B cell (primary cell): ENCODE measurements at regions of chr2 and their contacts with region 1.

Region 1: DNA sequence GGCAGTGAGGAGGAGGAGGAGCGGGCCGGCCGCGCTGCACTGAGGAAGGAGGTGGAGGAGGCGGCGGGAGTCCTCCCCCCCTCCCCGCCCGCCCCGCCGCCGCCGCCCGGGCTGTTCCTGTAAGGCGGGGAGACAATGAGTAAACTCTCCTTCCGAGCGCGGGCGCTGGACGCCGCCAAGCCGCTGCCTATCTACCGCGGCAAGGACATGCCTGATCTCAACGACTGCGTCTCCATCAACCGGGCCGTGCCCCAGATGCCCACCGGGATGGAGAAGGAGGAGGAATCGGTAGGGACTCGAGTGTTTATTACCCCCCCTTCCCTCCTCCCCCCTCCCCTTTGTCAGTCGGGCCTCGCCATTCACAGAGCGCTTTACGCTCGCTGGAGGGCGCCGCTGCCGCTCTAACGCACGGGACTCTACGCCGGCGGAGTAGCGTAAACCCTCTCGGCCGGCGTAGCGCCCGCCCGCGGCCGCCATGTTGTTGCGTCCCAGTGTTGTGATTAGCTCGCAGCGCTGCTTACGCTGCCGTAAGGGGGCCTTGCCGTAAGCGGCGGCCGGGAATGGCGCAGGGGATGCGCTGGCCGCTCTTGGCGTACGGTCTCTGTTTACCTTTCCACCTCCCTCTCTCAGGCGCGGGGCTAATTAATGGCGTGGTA is 460 bp downstream of the EPC2 start:
- DNase-seq: peak; percentile 99
- ATAC-seq: peak; percentile 78
- H3K4me3 ChIP-seq: peak overlapping the region; percentile 84 to 96 (median 93)
- H3K4me3 Mint-ChIP-seq: peak overlapping the region; percentile 97
- H3K27ac ChIP-seq: peak overlapping the region; percentile 92 to 94
- H3K27ac Mint-ChIP-seq: peak overlapping the region; percentile 98
- H3K4me1 ChIP-seq: peaks cover 19 to 25% of the 10 kb centered on the region in 2 donors
- H3K4me1 Mint-ChIP-seq: peaks cover 40% of the 10 kb centered on the region
- H3K27me3 ChIP-seq: no peaks in the 10 kb centered on the region
- H3K27me3 Mint-ChIP-seq: no peaks in the 10 kb centered on the region
- CTCF ChIP-seq: peak; percentile 22

Region 2: DNA sequence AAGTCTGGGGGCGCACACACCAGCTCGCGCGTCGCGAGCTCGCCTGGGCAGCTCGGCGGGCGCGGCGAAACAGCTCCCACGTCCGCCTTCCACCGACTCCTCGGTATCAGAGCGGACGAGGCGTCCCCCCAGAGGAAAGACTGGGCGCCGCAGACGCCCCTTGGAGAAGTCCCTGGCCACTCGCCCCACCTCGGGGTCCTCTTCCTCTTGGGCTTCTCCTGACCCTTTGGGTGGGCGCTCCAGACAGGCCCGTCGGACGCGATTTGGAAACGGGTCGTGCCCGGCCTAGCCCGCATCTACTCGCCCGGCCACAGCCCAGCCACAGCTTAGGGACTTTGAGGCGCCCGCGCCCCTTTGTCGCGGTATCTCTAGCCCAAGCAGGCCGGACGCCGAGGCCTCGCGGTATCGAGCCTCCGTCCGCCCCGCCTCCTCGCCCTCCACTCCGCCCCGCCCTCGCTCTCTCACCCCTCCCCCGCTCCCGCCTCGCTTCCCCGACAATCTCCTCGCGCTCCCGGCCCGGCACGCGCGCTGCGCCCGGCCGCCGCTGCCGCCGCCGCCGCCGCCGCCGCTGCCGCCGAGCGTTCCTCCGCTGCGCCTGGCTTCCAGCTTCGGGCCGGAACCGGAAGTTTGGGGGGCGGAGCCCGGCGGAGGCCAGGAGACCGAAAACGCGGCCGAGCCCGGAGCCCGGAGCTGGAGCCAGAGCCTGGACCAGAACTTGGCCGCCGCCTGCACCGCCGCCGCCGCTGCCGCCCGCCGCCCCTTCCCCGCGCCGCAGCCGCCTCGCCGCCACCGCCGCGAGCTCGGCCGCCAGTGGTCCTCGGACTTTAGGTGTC is 800.9 kb before region 1 on chr2:
- CTCF ChIA-PET with region 1: no interaction called
- POLR2A ChIA-PET with region 1: no interaction called
- intact Hi-C with region 1: loop called (anchors 10 kb)
- DNase-seq: peak; percentile 91
- ATAC-seq: peak; percentile 87
- H3K4me3 ChIP-seq: peak overlapping the region; percentile 11 to 89 (median 69)
- H3K4me3 Mint-ChIP-seq: peak overlapping the region; percentile 95
- H3K27ac ChIP-seq: peak overlapping the region; percentile 29 to 56
- H3K27ac Mint-ChIP-seq: peak overlapping the region; percentile 86
- H3K4me1 ChIP-seq: peaks cover 19 to 21% of the 10 kb centered on the region in 2 donors
- H3K4me1 Mint-ChIP-seq: peaks cover 27% of the 10 kb centered on the region
- H3K27me3 ChIP-seq: peaks cover 0 to 29% (median 26%) of the 10 kb centered on the region in 4 experiments
- H3K27me3 Mint-ChIP-seq: peaks cover 51% of the 10 kb centered on the region
- CTCF ChIP-seq: no peak

Region 3: GRCh38 chr2:148020111-148021058 is 624.6 kb before region 1 on chr2 and contains the start of gene ORC4:
- CTCF ChIA-PET with region 1: no interaction called
- POLR2A ChIA-PET with region 1: interaction called, 21 read pairs
- intact Hi-C with region 1: loop called (anchors 1 kb)
- DNase-seq: peak; percentile 99
- ATAC-seq: peak; percentile 89
- H3K4me3 ChIP-seq: peak within 1 kb of the TSS; percentile 79 to 95 (median 80)
- H3K4me3 Mint-ChIP-seq: peak within 1 kb of the TSS; percentile 99
- H3K27ac ChIP-seq: peak within 1 kb of the TSS; percentile 91 to 92
- H3K27ac Mint-ChIP-seq: peak within 1 kb of the TSS; percentile 94
- H3K4me1 ChIP-seq: peaks cover 23 to 37% of the 10 kb centered on the region in 2 donors
- H3K4me1 Mint-ChIP-seq: peaks cover 52% of the 10 kb centered on the region
- H3K27me3 ChIP-seq: no peaks in the 10 kb centered on the region
- H3K27me3 Mint-ChIP-seq: no peaks in the 10 kb centered on the region
- CTCF ChIP-seq: no peak
- total RNA-seq, gene ORC4: 44.3 and 48.9 TPM in 2 replicates

Region 4: GRCh38 chr2:148447877-148448276 is 197.1 kb before region 1 on chr2:
- CTCF ChIA-PET with region 1: no interaction called
- POLR2A ChIA-PET with region 1: no interaction called
- intact Hi-C with region 1: no loop called
- DNase-seq: no peak
- ATAC-seq: no peak
- H3K4me3 ChIP-seq: no peak overlapping the region
- H3K4me3 Mint-ChIP-seq: no peak overlapping the region
- H3K27ac ChIP-seq: no peak overlapping the region
- H3K27ac Mint-ChIP-seq: no peak overlapping the region
- H3K4me1 ChIP-seq: no peaks in the 10 kb centered on the region
- H3K4me1 Mint-ChIP-seq: no peaks in the 10 kb centered on the region
- H3K27me3 ChIP-seq: no peaks in the 10 kb centered on the region
- H3K27me3 Mint-ChIP-seq: no peaks in the 10 kb centered on the region
- CTCF ChIP-seq: no peak

Region 5: DNA sequence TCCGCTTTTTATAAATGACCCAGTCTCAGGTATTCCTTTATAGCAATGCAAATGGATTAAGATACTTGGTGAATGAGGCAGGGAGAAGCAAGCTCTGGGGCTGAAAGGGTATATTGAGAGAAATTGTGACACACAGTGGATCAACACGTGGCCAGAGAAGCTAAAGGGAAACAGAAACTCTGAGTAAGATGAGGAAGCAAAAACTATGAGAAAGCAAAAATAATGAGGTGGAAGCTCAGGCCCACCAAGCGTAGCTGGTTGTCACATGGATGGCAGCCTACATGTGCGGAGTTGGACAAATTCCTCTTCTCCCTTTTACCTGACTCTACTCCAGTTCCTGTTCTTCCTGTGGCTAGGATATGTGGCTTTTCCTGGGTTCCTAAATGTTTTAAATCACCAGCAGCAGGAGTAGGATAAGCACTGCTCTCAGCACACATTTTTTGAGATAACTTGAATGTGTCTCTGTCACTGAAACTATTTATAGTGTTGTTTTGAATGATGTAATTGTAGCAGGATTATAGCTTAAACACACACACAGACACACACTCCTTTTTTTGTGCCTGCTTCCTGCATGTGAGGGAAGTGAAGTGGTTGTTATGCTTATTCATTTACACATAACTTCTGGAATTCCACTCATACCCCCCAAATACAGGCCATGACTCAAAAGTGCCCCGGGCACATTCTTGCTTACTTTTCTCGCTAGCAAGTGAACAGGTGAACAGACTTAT is 30.5 kb before region 1 on chr2:
- CTCF ChIA-PET with region 1: no interaction called
- POLR2A ChIA-PET with region 1: no interaction called
- intact Hi-C with region 1: loop called (anchors 2 kb)
- DNase-seq: peak; percentile 59
- ATAC-seq: peak; percentile 83
- H3K4me3 ChIP-seq: no peak overlapping the region
- H3K4me3 Mint-ChIP-seq: peak overlapping the region; percentile 15
- H3K27ac ChIP-seq: peak overlapping the region; percentile 42 to 59
- H3K27ac Mint-ChIP-seq: peak overlapping the region; percentile 59
- H3K4me1 ChIP-seq: peaks cover 20 to 28% of the 10 kb centered on the region in 2 donors
- H3K4me1 Mint-ChIP-seq: peaks cover 20% of the 10 kb centered on the region
- H3K27me3 ChIP-seq: no peaks in the 10 kb centered on the region
- H3K27me3 Mint-ChIP-seq: no peaks in the 10 kb centered on the region
- CTCF ChIP-seq: no peak

Region 6: DNA sequence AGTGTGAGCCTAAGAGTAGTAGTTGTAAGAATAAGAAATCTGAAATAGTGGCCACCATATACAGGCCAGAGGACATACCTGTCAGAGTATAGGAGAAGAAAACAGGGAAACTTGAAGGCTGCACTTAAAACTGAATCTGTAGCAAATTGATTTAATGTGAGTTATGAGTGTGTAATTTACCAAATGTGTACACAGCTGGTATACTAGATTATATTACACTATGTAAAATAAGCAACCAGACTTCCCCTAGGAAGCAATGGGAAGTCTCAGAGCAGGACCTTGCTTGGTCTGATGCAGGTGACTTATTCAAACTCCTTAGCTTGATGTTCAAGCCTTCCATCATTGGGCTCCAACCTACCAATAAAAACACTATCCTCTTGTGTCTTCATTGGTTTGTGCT is 17.8 kb before region 1 on chr2:
- CTCF ChIA-PET with region 1: no interaction called
- POLR2A ChIA-PET with region 1: interaction called, 10 read pairs
- intact Hi-C with region 1: no loop called
- DNase-seq: no peak
- ATAC-seq: no peak
- H3K4me3 ChIP-seq: no peak overlapping the region
- H3K4me3 Mint-ChIP-seq: no peak overlapping the region
- H3K27ac ChIP-seq: no peak overlapping the region
- H3K27ac Mint-ChIP-seq: no peak overlapping the region
- H3K4me1 ChIP-seq: no peaks in the 10 kb centered on the region
- H3K4me1 Mint-ChIP-seq: peaks cover 2% of the 10 kb centered on the region
- H3K27me3 ChIP-seq: no peaks in the 10 kb centered on the region
- H3K27me3 Mint-ChIP-seq: peaks cover 9% of the 10 kb centered on the region
- CTCF ChIP-seq: no peak

Region 7: DNA sequence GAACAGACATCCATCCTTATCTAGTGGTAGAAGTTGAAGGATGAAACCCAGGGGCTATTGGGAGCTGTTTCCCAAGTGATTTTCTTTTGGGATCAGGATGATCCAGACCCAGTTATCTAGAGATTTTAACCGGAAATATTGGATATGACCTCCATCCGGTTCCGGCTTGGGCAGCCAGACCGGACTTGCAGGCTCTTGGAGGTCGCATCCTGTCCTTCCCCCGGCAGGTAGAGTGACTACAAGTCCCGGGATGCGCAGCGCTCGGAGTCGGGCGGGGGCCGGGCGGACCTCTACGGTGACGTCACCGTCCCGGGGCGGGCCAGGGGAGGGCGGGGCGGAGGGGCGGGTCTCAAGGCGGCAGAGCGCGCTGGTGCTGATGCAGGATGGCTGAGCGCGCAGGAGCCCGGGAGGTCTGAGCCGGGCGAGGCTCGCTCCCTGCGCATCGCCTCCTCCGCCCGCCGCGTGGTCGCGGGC is 229.9 kb after region 1 on chr2 and contains the start of gene KIF5C:
- CTCF ChIA-PET with region 1: no interaction called
- POLR2A ChIA-PET with region 1: interaction called, 6 read pairs
- intact Hi-C with region 1: loop called (anchors 1 kb)
- DNase-seq: peak; percentile 88
- ATAC-seq: peak; percentile 92
- H3K4me3 ChIP-seq: peak within 1 kb of the TSS in 4 of 5 experiments; percentile 37 to 67 (median 58)
- H3K4me3 Mint-ChIP-seq: peak within 1 kb of the TSS; percentile 86
- H3K27ac ChIP-seq: no peak within 1 kb of the TSS
- H3K27ac Mint-ChIP-seq: peak within 1 kb of the TSS; percentile 32
- H3K4me1 ChIP-seq: peaks cover 18 to 24% of the 10 kb centered on the region in 2 donors
- H3K4me1 Mint-ChIP-seq: peaks cover 16% of the 10 kb centered on the region
- H3K27me3 ChIP-seq: peaks cover 0 to 38% (median 14%) of the 10 kb centered on the region in 4 experiments
- H3K27me3 Mint-ChIP-seq: peaks cover 43% of the 10 kb centered on the region
- CTCF ChIP-seq: no peak
- total RNA-seq, gene KIF5C: 6.0 and 6.1 TPM in 2 replicates